CD4-positive, alpha-beta T cell (primary cell): ENCODE measurements at regions of chr3 and their contacts with region 1.

Region 1: GRCh38 chr3:59575113-59576001 is 525.5 kb upstream of the CFAP20DC start:
- DNase-seq: peak; percentile 77 to 94 (median 86)
- ATAC-seq: peak; percentile 87
- H3K4me3 ChIP-seq: no peak overlapping the region
- H3K4me3 Mint-ChIP-seq: no peak overlapping the region
- H3K27ac ChIP-seq: no peak overlapping the region
- H3K27ac Mint-ChIP-seq: no peak overlapping the region
- H3K4me1 ChIP-seq: peaks cover 5% of the 10 kb centered on the region
- H3K4me1 Mint-ChIP-seq: peaks cover 8% of the 10 kb centered on the region
- H3K27me3 ChIP-seq: no peaks in the 10 kb centered on the region
- H3K27me3 Mint-ChIP-seq: no peaks in the 10 kb centered on the region
- CTCF ChIP-seq: peak; percentile 93

Region 2: GRCh38 chr3:59809710-59810444 is 234.5 kb after region 1 on chr3:
- CTCF ChIA-PET with region 1: interaction called, 3 read pairs
- POLR2A ChIA-PET with region 1: no interaction called
- intact Hi-C with region 1: loop called in 1 of 2 experiments (anchors 5 kb)
- DNase-seq: peak in 3 of 14 experiments; percentile 14 to 23 (median 19)
- ATAC-seq: no peak
- H3K4me3 ChIP-seq: no peak overlapping the region
- H3K4me3 Mint-ChIP-seq: no peak overlapping the region
- H3K27ac ChIP-seq: no peak overlapping the region
- H3K27ac Mint-ChIP-seq: no peak overlapping the region
- H3K4me1 ChIP-seq: no peaks in the 10 kb centered on the region
- H3K4me1 Mint-ChIP-seq: peaks cover 34% of the 10 kb centered on the region
- H3K27me3 ChIP-seq: no peaks in the 10 kb centered on the region
- H3K27me3 Mint-ChIP-seq: no peaks in the 10 kb centered on the region
- CTCF ChIP-seq: no peak

Region 3: GRCh38 chr3:59895972-59896371 is 320.6 kb after region 1 on chr3:
- CTCF ChIA-PET with region 1: no interaction called
- POLR2A ChIA-PET with region 1: no interaction called
- intact Hi-C with region 1: no loop called
- DNase-seq: no peak
- ATAC-seq: no peak
- H3K4me3 ChIP-seq: no peak overlapping the region
- H3K4me3 Mint-ChIP-seq: no peak overlapping the region
- H3K27ac ChIP-seq: no peak overlapping the region
- H3K27ac Mint-ChIP-seq: peak overlapping the region; percentile 28
- H3K4me1 ChIP-seq: peaks cover 5% of the 10 kb centered on the region
- H3K4me1 Mint-ChIP-seq: peaks cover 71% of the 10 kb centered on the region
- H3K27me3 ChIP-seq: no peaks in the 10 kb centered on the region
- H3K27me3 Mint-ChIP-seq: no peaks in the 10 kb centered on the region
- CTCF ChIP-seq: no peak

Region 4: GRCh38 chr3:60081381-60082095 is 506.2 kb after region 1 on chr3:
- CTCF ChIA-PET with region 1: no interaction called
- POLR2A ChIA-PET with region 1: no interaction called
- intact Hi-C with region 1: loop called in 1 of 2 experiments (anchors 5 kb)
- DNase-seq: peak in 3 of 14 experiments; percentile 46 to 66 (median 47)
- ATAC-seq: peak; percentile 43
- H3K4me3 ChIP-seq: peak overlapping the region; percentile 54
- H3K4me3 Mint-ChIP-seq: peak overlapping the region; percentile 87
- H3K27ac ChIP-seq: peak overlapping the region; percentile 6 to 61
- H3K27ac Mint-ChIP-seq: peak overlapping the region; percentile 88
- H3K4me1 ChIP-seq: peaks cover 13% of the 10 kb centered on the region
- H3K4me1 Mint-ChIP-seq: peaks cover 54% of the 10 kb centered on the region
- H3K27me3 ChIP-seq: no peaks in the 10 kb centered on the region
- H3K27me3 Mint-ChIP-seq: no peaks in the 10 kb centered on the region
- CTCF ChIP-seq: no peak

Region 5: GRCh38 chr3:60431599-60431958 is 856.2 kb after region 1 on chr3:
- CTCF ChIA-PET with region 1: interaction called, 3 read pairs
- POLR2A ChIA-PET with region 1: no interaction called
- intact Hi-C with region 1: loop called in 1 of 2 experiments (anchors 1 kb)
- DNase-seq: peak in 4 of 14 experiments; percentile 17 to 29 (median 26)
- ATAC-seq: no peak
- H3K4me3 ChIP-seq: no peak overlapping the region
- H3K4me3 Mint-ChIP-seq: no peak overlapping the region
- H3K27ac ChIP-seq: no peak overlapping the region
- H3K27ac Mint-ChIP-seq: no peak overlapping the region
- H3K4me1 ChIP-seq: no peaks in the 10 kb centered on the region
- H3K4me1 Mint-ChIP-seq: peaks cover 25% of the 10 kb centered on the region
- H3K27me3 ChIP-seq: no peaks in the 10 kb centered on the region
- H3K27me3 Mint-ChIP-seq: no peaks in the 10 kb centered on the region
- CTCF ChIP-seq: no peak

Region 6: DNA sequence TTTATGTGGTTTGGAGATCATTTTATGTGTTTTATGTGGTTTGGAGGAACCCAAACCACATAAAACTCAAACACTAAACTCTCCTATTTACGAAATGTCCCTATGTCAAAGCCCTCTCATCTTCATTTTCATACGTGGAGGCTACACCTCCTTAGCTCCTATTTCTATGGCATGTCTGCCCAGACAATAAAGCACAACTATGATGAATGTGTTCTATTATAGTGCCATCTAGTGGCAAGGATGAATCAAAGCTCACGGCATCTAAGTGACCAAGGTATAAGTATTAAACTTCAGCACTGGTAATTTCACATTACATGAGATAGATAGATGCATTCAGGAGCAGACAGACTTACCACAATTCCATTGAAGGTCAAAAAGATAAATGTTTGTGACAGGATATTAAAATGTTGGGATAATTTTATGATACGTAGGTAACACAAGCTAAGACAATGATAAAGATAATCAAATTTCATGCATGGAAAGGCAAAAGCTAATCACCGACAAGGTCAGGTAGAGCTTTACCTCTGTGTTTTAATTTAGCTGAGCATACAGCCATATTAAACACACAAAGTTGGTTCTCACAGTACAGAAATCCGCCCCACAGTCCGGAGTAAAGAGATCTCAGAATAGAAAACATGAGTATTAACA is 1806.5 kb after region 1 on chr3:
- CTCF ChIA-PET with region 1: interaction called, 6 read pairs
- POLR2A ChIA-PET with region 1: no interaction called
- intact Hi-C with region 1: loop called (anchors 2 to 5 kb)
- DNase-seq: peak in 3 of 14 experiments; percentile 48 to 50 (median 50)
- ATAC-seq: peak; percentile 51
- H3K4me3 ChIP-seq: no peak overlapping the region
- H3K4me3 Mint-ChIP-seq: no peak overlapping the region
- H3K27ac ChIP-seq: no peak overlapping the region
- H3K27ac Mint-ChIP-seq: no peak overlapping the region
- H3K4me1 ChIP-seq: no peaks in the 10 kb centered on the region
- H3K4me1 Mint-ChIP-seq: peaks cover 5% of the 10 kb centered on the region
- H3K27me3 ChIP-seq: peaks cover 0 to 4% of the 10 kb centered on the region in 2 experiments
- H3K27me3 Mint-ChIP-seq: peaks cover 15% of the 10 kb centered on the region
- CTCF ChIP-seq: peak; percentile 66